ENCODE measurements at regions of chr5 and their contacts with region 1.

Region 1: GRCh38 chr5:75059912-75060545 is 7.7 kb upstream of the GCNT4 start:
- DNase-seq: no peak
- ATAC-seq: peak; percentile 87
- H3K4me3 Mint-ChIP-seq: peak overlapping the region; percentile 55
- H3K27ac Mint-ChIP-seq: peak overlapping the region; percentile 84
- H3K4me1 Mint-ChIP-seq: peaks cover 43% of the 10 kb centered on the region
- H3K27me3 Mint-ChIP-seq: no peaks in the 10 kb centered on the region

Region 2: DNA sequence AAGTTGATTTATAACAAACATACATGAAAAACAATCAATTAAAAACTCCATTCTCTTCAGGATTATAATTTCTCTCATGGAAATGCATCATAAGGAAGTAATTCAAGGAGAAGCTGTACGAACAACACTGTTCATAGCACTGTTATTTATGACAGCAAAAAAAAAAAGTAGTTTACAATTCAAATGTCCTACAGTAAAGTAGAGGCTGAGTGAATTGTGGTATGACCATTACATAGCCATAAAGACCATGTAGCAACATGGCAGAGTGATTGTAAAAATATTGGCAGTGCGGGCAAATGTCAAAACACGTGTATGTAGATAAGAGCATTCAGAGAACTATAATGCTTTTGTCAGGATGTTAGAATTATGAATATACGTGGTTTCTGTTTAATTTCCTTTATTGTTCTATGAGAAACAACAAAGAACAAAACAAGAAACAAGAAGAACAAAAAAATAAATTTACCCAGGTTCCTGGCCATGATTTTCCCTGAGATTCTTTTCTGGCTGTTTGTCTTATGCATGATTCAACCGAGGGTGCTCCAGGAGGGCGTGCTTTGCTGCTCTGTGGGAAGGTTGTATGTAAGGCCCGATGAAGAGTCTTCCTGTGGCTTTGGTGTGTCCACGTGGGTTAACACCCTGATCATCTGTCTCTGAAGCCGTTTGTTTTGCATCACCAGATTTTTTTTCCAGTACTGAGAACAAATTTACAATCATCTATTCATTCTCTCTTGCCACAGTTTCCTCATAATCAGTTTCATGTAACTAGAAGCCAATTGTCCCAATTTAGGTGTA is 36.5 kb before region 1 on chr5:
- POLR2A ChIA-PET with region 1: no interaction called
- DNase-seq: no peak
- ATAC-seq: peak; percentile 90
- H3K4me3 Mint-ChIP-seq: peak overlapping the region; percentile 51
- H3K27ac Mint-ChIP-seq: peak overlapping the region; percentile 76
- H3K4me1 Mint-ChIP-seq: peaks cover 29% of the 10 kb centered on the region
- H3K27me3 Mint-ChIP-seq: peaks cover 1% of the 10 kb centered on the region

Region 3: GRCh38 chr5:75078027-75078426 is 18.0 kb after region 1 on chr5:
- POLR2A ChIA-PET with region 1: no interaction called
- DNase-seq: no peak
- ATAC-seq: no peak
- H3K4me3 Mint-ChIP-seq: no peak overlapping the region
- H3K27ac Mint-ChIP-seq: no peak overlapping the region
- H3K4me1 Mint-ChIP-seq: peaks cover 3% of the 10 kb centered on the region
- H3K27me3 Mint-ChIP-seq: peaks cover 3% of the 10 kb centered on the region

Region 4: GRCh38 chr5:75236322-75237316 is 176.6 kb after region 1 on chr5 and contains the start of gene ANKRD31:
- POLR2A ChIA-PET with region 1: interaction called, 31 read pairs
- DNase-seq: peak; percentile 97
- ATAC-seq: peak; percentile 96
- H3K4me3 Mint-ChIP-seq: peak within 1 kb of the TSS; percentile 92
- H3K27ac Mint-ChIP-seq: peak within 1 kb of the TSS; percentile 98
- H3K4me1 Mint-ChIP-seq: peaks cover 14% of the 10 kb centered on the region
- H3K27me3 Mint-ChIP-seq: no peaks in the 10 kb centered on the region
- total RNA-seq, gene ANKRD31: 0.51 to 0.58 TPM

Measured in activated naive CD8-positive, alpha-beta T cell treated with anti-CD3 and anti-CD28 coated beads, Interleukin-2, amount 10 ng/mL, durations not matched to agents 7 days and 5 days (primary cell).